Pancreas (tissue), 10 donors: ENCODE measurements at regions of chr1 and their contacts with region 1.

Region 1: GRCh38 chr1:54810100-54810942 is 9.2 kb upstream of the TTC22 start:
- DNase-seq: peak in 5 of 6 donors; percentile 43 to 83 (median 68)
- ATAC-seq: peak; percentile 91 to 99 (median 97)
- H3K4me3 ChIP-seq: no peak overlapping the region
- H3K27ac ChIP-seq: no peak overlapping the region
- H3K4me1 ChIP-seq: no peaks in the 10 kb centered on the region
- H3K27me3 ChIP-seq: no peaks in the 10 kb centered on the region
- CTCF ChIP-seq: peak; percentile 28 to 70 (median 64)

Region 2: DNA sequence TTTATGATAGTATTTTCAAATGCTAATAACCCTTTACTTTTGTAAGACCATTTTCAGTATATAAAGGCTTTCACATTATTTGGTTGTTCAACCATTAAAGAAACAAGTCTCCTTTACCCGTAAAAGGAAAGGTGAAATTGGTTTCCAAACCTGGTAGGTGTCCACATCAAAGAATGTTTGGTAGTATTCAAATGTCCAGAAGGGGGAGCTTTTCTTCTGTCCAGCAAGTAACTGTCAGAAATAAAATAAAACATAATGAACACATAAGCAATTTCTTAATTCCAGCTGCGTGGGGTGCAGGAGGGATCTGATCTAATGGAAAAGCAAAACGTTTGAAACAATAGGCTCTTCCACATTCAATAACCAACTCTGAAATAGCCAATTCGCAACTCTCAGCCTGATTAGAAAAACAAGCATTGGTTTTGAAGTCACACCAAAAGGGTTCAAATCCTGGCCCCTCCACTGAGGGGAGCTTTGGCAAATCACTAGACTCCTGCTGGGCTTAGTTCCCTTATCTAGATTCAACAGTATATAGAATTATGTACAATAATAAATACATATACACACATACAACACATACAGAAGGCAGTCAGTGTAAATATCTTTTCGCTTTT is 931.7 kb before region 1 on chr1:
- intact Hi-C with region 1: loop called in 1 of 3 experiments (anchors 10 kb)
- DNase-seq: no peak
- ATAC-seq: peak in 3 of 4 donors; percentile 57 to 74 (median 58)
- H3K4me3 ChIP-seq: no peak overlapping the region
- H3K27ac ChIP-seq: no peak overlapping the region
- H3K4me1 ChIP-seq: no peaks in the 10 kb centered on the region
- H3K27me3 ChIP-seq: no peaks in the 10 kb centered on the region
- CTCF ChIP-seq: peak in 3 of 4 donors; percentile 18 to 54 (median 44)

Region 3: GRCh38 chr1:54070171-54070837 is 740.0 kb before region 1 on chr1:
- intact Hi-C with region 1: loop called in 1 of 3 experiments (anchors 10 kb)
- DNase-seq: no peak
- ATAC-seq: peak; percentile 63 to 99 (median 92)
- H3K4me3 ChIP-seq: no peak overlapping the region
- H3K27ac ChIP-seq: no peak overlapping the region
- H3K4me1 ChIP-seq: no peaks in the 10 kb centered on the region
- H3K27me3 ChIP-seq: no peaks in the 10 kb centered on the region
- CTCF ChIP-seq: peak; percentile 11 to 51 (median 42)

Region 4: GRCh38 chr1:54671985-54672608 is 138.2 kb before region 1 on chr1:
- intact Hi-C with region 1: loop called in 1 of 3 experiments (anchors 5 kb)
- DNase-seq: peak in 4 of 6 donors; percentile 9 to 60 (median 44)
- ATAC-seq: peak; percentile 56 to 94 (median 81)
- H3K4me3 ChIP-seq: no peak overlapping the region
- H3K27ac ChIP-seq: no peak overlapping the region
- H3K4me1 ChIP-seq: no peaks in the 10 kb centered on the region
- H3K27me3 ChIP-seq: no peaks in the 10 kb centered on the region
- CTCF ChIP-seq: peak; percentile 22 to 50 (median 42)